ENCODE measurements at regions of chr9 and their contacts with region 1.

Region 1: DNA sequence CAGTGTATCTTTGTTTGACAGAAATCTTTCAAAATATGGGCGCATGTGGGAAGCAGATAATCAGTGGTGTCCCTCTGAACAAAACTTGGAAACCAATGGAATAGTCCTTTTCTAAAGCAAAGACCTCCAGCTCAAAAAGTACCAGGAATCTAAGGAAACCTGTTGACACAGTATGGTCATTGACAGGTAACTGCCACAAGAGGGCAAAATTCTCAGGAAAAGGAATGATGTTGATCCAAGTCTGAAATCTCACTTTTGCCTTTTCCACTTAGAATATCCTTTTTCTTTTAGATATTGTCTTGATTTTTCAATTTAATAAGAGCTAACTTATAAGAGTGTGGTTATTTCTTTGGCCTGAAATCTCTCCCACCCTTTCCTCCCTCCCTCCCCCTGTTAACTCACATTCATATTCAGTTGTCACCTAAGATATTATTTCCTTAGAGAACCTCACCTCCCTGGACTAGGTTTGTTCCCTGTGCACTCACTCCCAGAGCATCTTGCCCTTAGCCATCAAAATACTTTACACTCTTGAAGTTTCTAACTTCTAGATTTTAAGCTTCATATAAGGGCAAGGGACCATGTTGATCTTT is 59.0 kb upstream of the BARX1 start:
- DNase-seq: no peak
- H3K4me3 ChIP-seq: no peak overlapping the region
- H3K4me3 Mint-ChIP-seq: no peak overlapping the region
- H3K27ac ChIP-seq: no peak overlapping the region
- H3K27ac Mint-ChIP-seq: no peak overlapping the region
- H3K4me1 ChIP-seq: peaks cover 12% of the 10 kb centered on the region
- H3K4me1 Mint-ChIP-seq: peaks cover 0 to 3% (median 0%) of the 10 kb centered on the region in 3 donors
- H3K27me3 ChIP-seq: no peaks in the 10 kb centered on the region
- H3K27me3 Mint-ChIP-seq: peaks cover 5 to 8% of the 10 kb centered on the region in 2 donors

Region 2: DNA sequence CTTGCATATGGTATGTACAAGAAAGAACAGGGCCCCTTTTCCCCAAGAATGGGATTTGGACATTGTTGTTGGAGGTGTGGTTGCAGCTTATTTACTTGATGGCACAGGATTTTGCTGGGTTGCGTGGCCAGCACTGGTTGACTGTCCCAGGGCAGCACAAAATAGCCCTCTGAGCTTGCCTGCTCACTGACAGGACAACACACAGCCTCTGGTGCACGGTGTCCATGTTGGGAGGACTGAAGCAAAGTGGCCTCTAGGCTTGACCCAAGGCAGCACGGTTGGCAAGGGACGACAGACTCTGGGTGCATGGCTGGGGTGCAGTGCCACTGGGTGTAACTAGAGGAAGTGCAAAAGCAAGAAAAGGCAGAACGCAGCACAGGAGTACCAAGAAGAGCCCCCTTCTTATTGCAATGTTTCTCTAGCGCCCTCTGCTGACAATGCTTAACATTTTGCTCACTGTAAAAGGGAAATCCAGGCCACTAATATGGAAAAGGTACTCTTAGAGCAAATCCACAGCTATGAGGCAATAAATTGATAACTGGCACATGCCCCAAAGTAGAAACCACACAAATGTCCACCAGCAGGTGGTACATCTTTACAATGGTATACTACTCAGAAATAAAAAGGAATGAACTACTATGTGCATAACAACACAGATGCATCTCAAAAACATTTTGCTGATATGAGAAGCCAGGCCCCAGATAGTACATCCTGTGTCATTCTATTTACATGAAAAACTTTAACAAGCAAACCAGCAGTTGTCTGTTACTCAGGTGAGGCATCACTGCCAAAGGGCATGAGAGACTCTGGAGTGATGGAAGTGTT is 11.6 kb before region 1 on chr9:
- CTCF ChIA-PET with region 1: interaction called, 18 read pairs
- POLR2A ChIA-PET with region 1: no interaction called
- DNase-seq: peak in 1 of 5 donors; percentile 12
- H3K4me3 ChIP-seq: no peak overlapping the region
- H3K4me3 Mint-ChIP-seq: no peak overlapping the region
- H3K27ac ChIP-seq: no peak overlapping the region
- H3K27ac Mint-ChIP-seq: no peak overlapping the region
- H3K4me1 ChIP-seq: no peaks in the 10 kb centered on the region
- H3K4me1 Mint-ChIP-seq: no peaks in the 10 kb centered on the region
- H3K27me3 ChIP-seq: no peaks in the 10 kb centered on the region
- H3K27me3 Mint-ChIP-seq: peaks cover 15 to 32% of the 10 kb centered on the region in 2 donors

Region 3: GRCh38 chr9:94056442-94056974 is 42.3 kb after region 1 on chr9:
- CTCF ChIA-PET with region 1: no interaction called
- POLR2A ChIA-PET with region 1: no interaction called
- DNase-seq: no peak
- H3K4me3 ChIP-seq: no peak overlapping the region
- H3K4me3 Mint-ChIP-seq: no peak overlapping the region
- H3K27ac ChIP-seq: no peak overlapping the region
- H3K27ac Mint-ChIP-seq: no peak overlapping the region
- H3K4me1 ChIP-seq: no peaks in the 10 kb centered on the region
- H3K4me1 Mint-ChIP-seq: no peaks in the 10 kb centered on the region
- H3K27me3 ChIP-seq: no peaks in the 10 kb centered on the region
- H3K27me3 Mint-ChIP-seq: no peaks in the 10 kb centered on the region